ENCODE measurements at regions of chr9 and their contacts with region 1.

Region 1: GRCh38 chr9:33852216-33852826 is 35.4 kb downstream of the UBE2R2 start:
- DNase-seq: peak; percentile 85 to 86
- H3K4me3 ChIP-seq: no peak overlapping the region
- H3K27ac ChIP-seq: peak overlapping the region in 3 of 5 donors; percentile 20 to 48 (median 44)
- H3K4me1 ChIP-seq: peaks cover 33 to 86% (median 65%) of the 10 kb centered on the region in 4 donors
- H3K27me3 ChIP-seq: no peaks in the 10 kb centered on the region
- CTCF ChIP-seq: peak in 5 of 7 experiments; percentile 30 to 83 (median 58)
- EP300 ChIP-seq: no peak
- POLR2A ChIP-seq: no peak

Region 2: GRCh38 chr9:33718987-33719386 is 133.3 kb before region 1 on chr9:
- intact Hi-C with region 1: no loop called
- DNase-seq: no peak
- H3K4me3 ChIP-seq: no peak overlapping the region
- H3K27ac ChIP-seq: no peak overlapping the region
- H3K4me1 ChIP-seq: peaks cover 0 to 21% (median 3%) of the 10 kb centered on the region in 4 donors
- H3K27me3 ChIP-seq: peaks cover 0 to 18% (median 4%) of the 10 kb centered on the region in 3 donors
- CTCF ChIP-seq: no peak
- EP300 ChIP-seq: no peak
- POLR2A ChIP-seq: no peak

Region 3: DNA sequence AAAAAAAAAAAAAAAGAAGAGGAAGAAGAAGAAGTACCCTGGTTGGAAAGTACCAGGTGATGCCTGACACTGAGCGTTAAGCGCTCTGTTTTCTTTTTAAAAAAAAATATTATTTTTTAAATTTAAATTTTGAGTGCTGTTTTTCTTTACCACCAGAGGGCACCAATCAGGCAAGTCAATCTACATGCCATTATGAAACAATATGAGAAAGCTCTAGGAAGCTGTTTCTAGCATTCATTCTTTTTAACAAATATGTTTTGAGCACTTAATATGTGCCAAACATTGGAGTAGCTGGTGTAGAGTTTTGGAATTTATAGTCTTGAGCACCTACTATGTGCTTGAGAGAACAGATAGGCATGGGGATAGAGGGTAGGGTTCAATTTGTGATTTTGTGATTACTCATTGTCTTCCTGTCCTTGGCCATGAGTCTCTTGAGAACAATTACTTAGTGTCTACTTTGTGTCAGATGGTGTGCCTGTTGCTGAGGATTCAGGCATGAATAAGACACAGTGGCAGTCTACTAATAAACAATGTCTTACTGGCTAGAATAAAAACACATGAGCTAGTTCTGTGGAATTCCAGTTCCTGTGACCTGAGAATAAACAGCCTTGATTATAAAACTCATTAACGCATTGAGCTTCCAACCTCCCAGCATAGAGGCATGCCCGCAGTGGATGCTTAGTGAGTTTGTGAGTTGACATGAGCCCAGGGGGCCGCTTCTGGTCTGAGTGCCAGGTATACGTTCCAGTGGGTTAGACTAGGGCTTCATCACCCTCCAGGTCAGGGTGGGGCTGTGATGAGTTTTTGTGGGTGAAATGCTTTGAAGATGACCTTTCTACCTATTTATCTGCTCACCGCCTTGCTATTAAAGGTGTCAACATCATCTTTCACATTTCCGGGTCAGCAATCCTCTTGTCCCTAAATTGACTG is 38.3 kb before region 1 on chr9:
- intact Hi-C with region 1: loop called (anchors 5 kb)
- DNase-seq: peak in 1 of 2 donors; percentile 57
- H3K4me3 ChIP-seq: no peak overlapping the region
- H3K27ac ChIP-seq: peak overlapping the region; percentile 7 to 100 (median 100)
- H3K4me1 ChIP-seq: peaks cover 11 to 39% (median 31%) of the 10 kb centered on the region in 4 donors
- H3K27me3 ChIP-seq: no peaks in the 10 kb centered on the region
- CTCF ChIP-seq: peak in 5 of 7 experiments; percentile 35 to 78 (median 53)
- EP300 ChIP-seq: no peak
- POLR2A ChIP-seq: no peak